Panc1 (cell line): ENCODE measurements at regions of chr12 and their contacts with region 1.

Region 1: DNA sequence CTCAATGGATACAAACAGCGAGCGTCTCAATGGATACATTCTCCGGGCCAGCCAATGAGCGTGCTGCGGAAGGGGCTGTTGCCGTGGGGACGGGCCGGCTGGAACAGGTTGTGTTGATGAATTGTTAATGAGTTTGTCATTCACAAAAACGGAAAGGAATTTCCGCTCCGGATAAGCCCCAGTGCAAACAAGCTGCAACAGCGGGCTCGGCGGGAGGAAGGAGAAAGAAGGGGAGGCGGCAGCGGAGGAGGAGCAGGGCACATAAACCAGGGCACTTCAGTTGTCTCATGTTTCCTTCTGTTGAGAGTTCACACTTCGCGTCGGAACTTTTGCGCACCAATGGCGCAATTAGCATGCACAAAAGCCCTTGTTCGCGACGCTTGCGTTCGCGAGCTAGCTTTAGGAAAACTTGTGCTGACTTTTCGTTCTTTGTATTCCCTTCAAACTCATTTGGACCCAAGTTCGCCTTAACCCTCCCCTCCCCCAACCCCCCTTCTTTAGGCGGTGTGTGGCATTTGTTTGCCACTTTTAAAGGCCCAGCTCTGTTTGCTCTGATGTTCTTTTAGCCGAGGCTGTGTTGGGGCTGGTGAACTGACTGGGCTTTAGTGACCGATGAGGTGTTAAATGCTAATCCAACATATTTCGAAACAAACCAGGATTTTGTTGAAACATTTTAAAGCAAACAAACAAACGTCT is at the start of gene DUSP6:
- DNase-seq: peak; percentile 94
- ATAC-seq: peak; percentile 83
- H3K4me3 ChIP-seq: peak within 1 kb of the TSS; percentile 86 to 88
- H3K27ac ChIP-seq: peak within 1 kb of the TSS; percentile 86
- H3K4me1 ChIP-seq: peaks cover 25% of the 10 kb centered on the region
- H3K27me3 ChIP-seq: no peaks in the 10 kb centered on the region
- CTCF ChIP-seq: no peak
- total RNA-seq, gene DUSP6: 20.3 TPM

Region 2: DNA sequence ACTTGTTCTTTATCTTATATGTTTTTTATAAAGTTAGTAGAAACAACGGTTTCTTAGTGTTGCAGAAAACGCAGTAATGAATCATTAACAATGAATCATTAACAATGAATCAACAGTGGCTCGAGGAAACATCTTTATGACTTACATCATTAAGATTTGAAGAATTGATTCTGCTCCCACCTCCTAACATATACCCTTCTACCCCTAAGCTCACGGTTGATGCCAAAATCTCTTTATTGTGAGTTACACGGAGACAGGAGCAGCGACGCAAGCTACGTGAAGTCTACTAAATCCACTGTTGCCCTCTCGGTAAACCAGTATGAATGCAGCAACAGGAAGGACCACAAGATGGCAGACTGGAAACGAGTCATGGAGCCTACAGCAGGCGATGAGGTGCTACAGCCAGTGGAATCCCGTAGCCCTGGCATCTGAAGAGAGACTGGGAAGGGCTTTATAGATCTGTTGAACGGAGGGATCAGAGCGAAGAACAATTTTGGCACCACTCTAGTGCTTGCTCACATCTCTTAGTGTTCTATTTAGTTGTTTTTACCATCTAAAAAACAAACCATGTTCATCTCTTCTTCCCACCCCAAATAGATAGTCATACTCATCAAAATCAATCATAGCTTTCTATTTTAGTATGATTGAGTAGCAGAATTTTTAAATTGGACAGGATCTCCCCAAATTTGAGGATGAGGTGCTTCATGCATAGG is 333.1 kb before region 1 on chr12:
- CTCF ChIA-PET with region 1: no interaction called
- POLR2A ChIA-PET with region 1: interaction called, 3 read pairs
- in situ Hi-C with region 1: no loop called
- intact Hi-C with region 1: loop called (anchors 5 kb)
- DNase-seq: peak; percentile 85
- ATAC-seq: peak; percentile 99
- H3K4me3 ChIP-seq: peak overlapping the region; percentile 23 to 45
- H3K27ac ChIP-seq: no peak overlapping the region
- H3K4me1 ChIP-seq: peaks cover 2% of the 10 kb centered on the region; the same call in 1 of the 2 replicates
- H3K27me3 ChIP-seq: peaks cover 5% of the 10 kb centered on the region
- CTCF ChIP-seq: peak; percentile 90

Region 3: DNA sequence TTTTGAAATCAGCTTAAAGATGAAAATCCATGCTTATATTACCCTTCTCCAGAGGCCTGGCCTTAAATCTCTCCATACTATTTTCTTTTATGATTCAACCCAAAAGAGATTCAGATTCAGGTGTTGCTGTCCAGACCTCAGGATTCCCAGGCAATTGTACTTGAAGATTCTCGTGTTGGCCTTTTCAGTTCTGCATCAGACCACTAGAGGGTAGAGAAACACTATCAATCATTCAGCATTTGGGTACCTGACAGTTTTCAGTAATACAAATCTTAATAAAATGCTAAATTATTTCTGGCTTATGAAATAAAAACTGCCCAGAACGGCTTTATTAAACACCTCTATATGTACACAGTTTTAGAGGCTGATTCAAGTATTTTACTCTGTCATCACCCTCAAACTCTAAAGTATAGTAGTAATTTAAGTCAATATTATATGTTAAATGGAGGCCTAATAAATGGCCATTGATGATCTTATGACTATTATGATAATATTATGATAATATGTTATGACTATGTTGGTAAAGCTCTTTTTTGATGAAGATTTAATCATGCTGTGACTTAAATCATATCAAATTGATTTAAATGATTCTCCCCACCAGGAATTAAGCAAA is 301.5 kb before region 1 on chr12:
- CTCF ChIA-PET with region 1: no interaction called
- POLR2A ChIA-PET with region 1: no interaction called
- in situ Hi-C with region 1: no loop called
- intact Hi-C with region 1: loop called (anchors 10 kb)
- DNase-seq: peak; percentile 51
- ATAC-seq: peak; percentile 83
- H3K4me3 ChIP-seq: no peak overlapping the region
- H3K27ac ChIP-seq: no peak overlapping the region
- H3K4me1 ChIP-seq: no peaks in the 10 kb centered on the region
- H3K27me3 ChIP-seq: no peaks in the 10 kb centered on the region; the same call in 1 of the 2 replicates
- CTCF ChIP-seq: peak; percentile 77; the same call in 1 of the 2 replicates

Region 4: DNA sequence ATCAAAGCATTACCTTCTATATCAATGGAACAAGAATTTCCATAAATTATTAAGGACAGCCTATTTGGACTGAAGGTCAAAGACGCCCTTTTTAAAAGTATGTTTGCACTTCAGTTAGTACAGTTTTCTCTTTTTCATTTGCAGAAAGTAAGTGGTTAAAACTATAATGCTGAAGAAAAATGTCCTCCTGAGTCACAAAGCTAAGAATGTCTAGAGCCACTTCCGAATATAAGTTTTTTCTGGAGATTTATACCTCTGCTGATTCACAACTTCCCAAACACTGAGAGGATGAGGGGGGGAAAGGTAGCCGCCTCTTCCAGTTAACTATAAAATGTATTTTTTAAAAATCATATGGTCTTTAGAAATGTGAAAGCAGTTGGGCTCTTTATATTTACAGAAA is 85.2 kb before region 1 on chr12:
- CTCF ChIA-PET with region 1: no interaction called
- POLR2A ChIA-PET with region 1: no interaction called
- in situ Hi-C with region 1: no loop called
- intact Hi-C with region 1: no loop called
- DNase-seq: no peak
- ATAC-seq: no peak
- H3K4me3 ChIP-seq: no peak overlapping the region
- H3K27ac ChIP-seq: no peak overlapping the region
- H3K4me1 ChIP-seq: no peaks in the 10 kb centered on the region
- H3K27me3 ChIP-seq: peaks cover 2% of the 10 kb centered on the region; the same call in 1 of the 2 replicates
- CTCF ChIP-seq: no peak

Region 5: GRCh38 chr12:89280833-89281538 is 71.7 kb before region 1 on chr12:
- CTCF ChIA-PET with region 1: no interaction called
- POLR2A ChIA-PET with region 1: interaction called, 10 read pairs
- in situ Hi-C with region 1: no loop called
- intact Hi-C with region 1: no loop called
- DNase-seq: no peak
- ATAC-seq: no peak
- H3K4me3 ChIP-seq: no peak overlapping the region
- H3K27ac ChIP-seq: no peak overlapping the region
- H3K4me1 ChIP-seq: no peaks in the 10 kb centered on the region
- H3K27me3 ChIP-seq: no peaks in the 10 kb centered on the region
- CTCF ChIP-seq: no peak

Region 6: DNA sequence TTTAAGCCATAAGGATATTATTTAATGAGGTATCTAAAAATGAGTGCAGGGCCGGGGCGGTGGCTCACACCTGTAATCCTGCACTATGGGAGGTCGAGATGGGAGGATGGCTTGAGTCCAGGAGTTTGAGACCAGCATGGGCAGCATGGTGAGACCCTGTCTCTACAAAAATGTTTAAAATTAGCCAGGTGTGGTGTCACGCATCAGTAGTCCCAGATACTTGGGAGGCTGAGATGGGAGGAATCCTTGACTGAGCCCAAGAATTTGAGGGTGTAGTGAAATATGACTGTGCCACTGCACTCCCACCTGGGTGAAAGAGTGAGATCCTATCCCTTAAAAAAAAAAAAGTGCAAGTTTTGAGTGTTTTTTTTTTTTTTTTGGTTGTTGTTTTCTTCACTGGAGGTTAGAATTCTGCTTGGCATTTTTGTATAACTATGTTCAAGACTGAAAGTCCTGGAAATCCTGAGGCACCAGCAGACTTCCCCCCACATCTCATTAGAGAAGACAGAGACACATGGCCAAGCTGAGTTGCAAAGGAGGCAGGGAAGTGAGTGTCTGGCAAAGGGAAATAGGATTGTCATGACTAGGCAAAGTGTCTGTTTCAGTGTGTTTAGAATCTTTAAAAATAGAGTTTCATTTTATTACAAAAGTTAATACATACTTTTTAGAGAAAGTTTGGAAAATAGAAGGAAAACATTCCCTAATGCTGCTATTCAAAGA is 53.1 kb after region 1 on chr12:
- CTCF ChIA-PET with region 1: no interaction called
- POLR2A ChIA-PET with region 1: no interaction called
- in situ Hi-C with region 1: no loop called
- intact Hi-C with region 1: no loop called
- DNase-seq: no peak
- ATAC-seq: no peak
- H3K4me3 ChIP-seq: no peak overlapping the region
- H3K27ac ChIP-seq: no peak overlapping the region
- H3K4me1 ChIP-seq: no peaks in the 10 kb centered on the region
- H3K27me3 ChIP-seq: no peaks in the 10 kb centered on the region
- CTCF ChIP-seq: no peak

Region 7: GRCh38 chr12:89507015-89507824 is 154.6 kb after region 1 on chr12:
- CTCF ChIA-PET with region 1: no interaction called
- POLR2A ChIA-PET with region 1: no interaction called
- in situ Hi-C with region 1: no loop called
- intact Hi-C with region 1: no loop called
- DNase-seq: no peak
- ATAC-seq: no peak
- H3K4me3 ChIP-seq: no peak overlapping the region
- H3K27ac ChIP-seq: no peak overlapping the region
- H3K4me1 ChIP-seq: no peaks in the 10 kb centered on the region
- H3K27me3 ChIP-seq: no peaks in the 10 kb centered on the region
- CTCF ChIP-seq: no peak

Region 8: GRCh38 chr12:89524541-89525285 is 172.1 kb after region 1 on chr12 and contains the start of gene GALNT4:
- CTCF ChIA-PET with region 1: no interaction called
- POLR2A ChIA-PET with region 1: no interaction called
- in situ Hi-C with region 1: no loop called
- intact Hi-C with region 1: loop called (anchors 2 kb)
- DNase-seq: peak; percentile 67
- ATAC-seq: peak; percentile 92
- H3K4me3 ChIP-seq: peak within 1 kb of the TSS; percentile 89 to 93
- H3K27ac ChIP-seq: peak within 1 kb of the TSS; percentile 85
- H3K4me1 ChIP-seq: peaks cover 27% of the 10 kb centered on the region
- H3K27me3 ChIP-seq: no peaks in the 10 kb centered on the region
- CTCF ChIP-seq: peak; percentile 82
- total RNA-seq, gene GALNT4: 5.1 TPM